ENCODE measurements at regions of chr12 and their contacts with region 1.

Region 1: GRCh38 chr12:25436203-25437030 is 116.7 kb downstream of the LMNTD1 start:
- DNase-seq: peak; percentile 44 to 58
- H3K4me3 ChIP-seq: peak overlapping the region; percentile 45; the same call in 1 of the 2 replicates
- H3K27ac ChIP-seq: no peak overlapping the region
- H3K4me1 ChIP-seq: no peaks in the 10 kb centered on the region
- H3K27me3 ChIP-seq: no peaks in the 10 kb centered on the region
- CTCF ChIP-seq: peak; percentile 93

Region 2: DNA sequence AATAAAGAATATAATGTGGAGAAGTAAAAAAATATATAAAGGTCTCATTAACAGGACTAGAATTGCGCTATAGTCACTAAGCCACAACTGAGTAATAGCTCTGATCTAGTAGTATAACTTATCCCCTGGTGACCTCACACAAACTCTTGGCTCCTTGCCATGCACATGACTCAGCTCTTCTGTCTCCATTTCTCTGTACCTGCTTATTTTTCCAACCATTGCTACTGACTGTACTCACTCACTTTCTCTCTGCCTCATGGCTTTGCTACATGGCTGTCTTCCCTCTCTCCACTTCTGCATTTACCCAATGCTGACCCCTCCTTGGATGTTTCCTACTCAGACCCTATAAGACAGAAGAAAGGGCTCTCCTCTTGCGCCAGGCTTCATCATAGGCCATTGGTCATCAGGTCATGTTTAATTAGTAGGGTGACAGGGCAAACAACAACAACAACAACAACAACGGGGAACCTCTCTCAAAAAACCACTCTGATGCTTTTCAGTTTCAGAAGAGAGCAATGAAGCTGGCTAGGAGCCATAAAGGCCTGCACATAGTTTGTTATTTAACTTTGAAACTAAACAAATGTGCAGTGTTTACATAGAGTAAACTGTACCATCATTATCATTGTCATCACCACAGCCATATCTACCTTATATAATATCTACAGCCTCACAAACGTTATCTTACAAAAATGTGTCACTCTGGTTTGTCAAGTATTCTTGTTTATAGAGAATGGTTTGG is 160.0 kb before region 1 on chr12:
- CTCF ChIA-PET with region 1: no interaction called
- POLR2A ChIA-PET with region 1: no interaction called
- intact Hi-C with region 1: no loop called
- DNase-seq: peak; percentile 60 to 79
- H3K4me3 ChIP-seq: no peak overlapping the region
- H3K27ac ChIP-seq: peak overlapping the region; percentile 54
- H3K4me1 ChIP-seq: peaks cover 13% of the 10 kb centered on the region
- H3K27me3 ChIP-seq: no peaks in the 10 kb centered on the region
- CTCF ChIP-seq: no peak

Region 3: DNA sequence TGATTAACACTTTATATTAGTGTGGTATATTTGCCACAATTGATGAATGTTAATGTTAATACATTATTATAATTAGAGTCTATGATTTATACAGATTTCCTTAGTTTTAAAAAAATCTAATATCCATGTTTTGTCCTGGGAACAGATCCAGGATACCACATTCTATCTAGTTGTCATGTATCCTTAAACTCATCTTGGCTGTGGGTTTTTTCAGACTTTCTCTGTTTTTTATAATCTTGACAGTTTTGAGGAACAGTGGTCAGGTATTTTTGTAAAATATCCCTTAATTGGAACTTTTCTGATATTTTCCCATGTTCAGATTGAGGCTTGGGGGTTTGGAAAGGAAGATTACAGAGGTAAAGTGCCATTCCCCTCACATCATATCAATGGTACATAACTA is 12.6 kb after region 1 on chr12:
- CTCF ChIA-PET with region 1: no interaction called
- POLR2A ChIA-PET with region 1: no interaction called
- intact Hi-C with region 1: no loop called
- DNase-seq: no peak
- H3K4me3 ChIP-seq: no peak overlapping the region
- H3K27ac ChIP-seq: no peak overlapping the region
- H3K4me1 ChIP-seq: no peaks in the 10 kb centered on the region
- H3K27me3 ChIP-seq: no peaks in the 10 kb centered on the region
- CTCF ChIP-seq: no peak

Region 4: GRCh38 chr12:25546318-25546717 is 109.9 kb after region 1 on chr12:
- CTCF ChIA-PET with region 1: no interaction called
- POLR2A ChIA-PET with region 1: no interaction called
- intact Hi-C with region 1: loop called (anchors 5 kb)
- DNase-seq: no peak
- H3K4me3 ChIP-seq: no peak overlapping the region
- H3K27ac ChIP-seq: no peak overlapping the region
- H3K4me1 ChIP-seq: no peaks in the 10 kb centered on the region
- H3K27me3 ChIP-seq: no peaks in the 10 kb centered on the region
- CTCF ChIP-seq: no peak

Region 5: GRCh38 chr12:26028953-26029735 is 592.7 kb after region 1 on chr12:
- CTCF ChIA-PET with region 1: no interaction called
- POLR2A ChIA-PET with region 1: no interaction called
- intact Hi-C with region 1: loop called (anchors 1 kb)
- DNase-seq: peak in 1 of 2 experiments; percentile 42
- H3K4me3 ChIP-seq: no peak overlapping the region
- H3K27ac ChIP-seq: no peak overlapping the region
- H3K4me1 ChIP-seq: peaks cover 16% of the 10 kb centered on the region
- H3K27me3 ChIP-seq: no peaks in the 10 kb centered on the region
- CTCF ChIP-seq: peak; percentile 87

Region 6: GRCh38 chr12:26651566-26652188 is 1215.3 kb after region 1 on chr12:
- CTCF ChIA-PET with region 1: no interaction called
- POLR2A ChIA-PET with region 1: no interaction called
- intact Hi-C with region 1: loop called (anchors 5 kb)
- DNase-seq: peak; percentile 67 to 77
- H3K4me3 ChIP-seq: no peak overlapping the region
- H3K27ac ChIP-seq: no peak overlapping the region
- H3K4me1 ChIP-seq: peaks cover 12% of the 10 kb centered on the region; the same call in 1 of the 2 replicates
- H3K27me3 ChIP-seq: no peaks in the 10 kb centered on the region
- CTCF ChIP-seq: peak; percentile 97